ENCODE measurements at regions of chr14 and their contacts with region 1.

Region 1: DNA sequence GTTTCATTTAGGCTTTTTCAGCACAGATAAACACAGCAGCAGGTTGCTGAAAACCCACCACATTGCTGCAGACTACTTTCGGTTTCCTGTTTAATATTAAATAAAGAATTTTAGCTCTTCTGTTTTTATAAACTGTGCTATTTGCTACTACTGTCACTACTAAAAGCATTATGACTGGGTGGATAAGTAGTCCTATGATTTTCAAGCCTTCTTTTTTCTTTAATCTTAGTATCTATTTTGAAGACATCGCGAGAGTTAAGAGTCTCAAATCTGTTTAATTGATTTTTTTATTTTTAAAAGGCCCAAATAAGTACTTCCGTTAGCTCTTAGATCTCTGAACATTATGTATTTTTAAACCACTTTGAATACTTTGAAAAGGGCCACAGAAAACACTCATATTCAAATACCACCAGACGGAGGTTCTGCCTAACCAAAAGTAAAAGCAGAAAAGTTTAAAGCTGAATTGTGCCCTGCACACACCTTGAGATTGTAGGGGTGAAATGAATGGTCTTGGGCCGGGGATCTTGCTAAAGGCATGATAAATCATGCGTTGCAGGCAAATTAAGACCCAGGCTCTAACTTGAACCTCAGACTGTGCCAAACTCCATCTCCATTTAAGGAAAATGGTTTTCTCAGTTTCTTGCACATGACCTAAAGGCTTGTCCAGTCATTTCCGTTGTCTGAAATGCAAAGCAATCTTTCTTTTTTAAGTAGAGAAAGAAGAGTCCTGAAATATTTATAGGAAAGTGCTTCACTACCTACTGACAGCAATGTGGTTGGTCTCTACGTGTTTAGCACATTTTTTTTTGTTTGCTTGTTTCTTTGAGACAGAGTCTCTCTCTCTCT is 13.6 kb upstream of the FOXN3 start:
- DNase-seq: peak; percentile 97
- H3K4me3 ChIP-seq: peak overlapping the region; percentile 67
- H3K27ac ChIP-seq: peak overlapping the region; percentile 100
- H3K4me1 ChIP-seq: peaks cover 90% of the 10 kb centered on the region
- CTCF ChIP-seq: no peak; the same call in 1 of the 2 replicates

Region 2: GRCh38 chr14:89384023-89384422 is 46.6 kb before region 1 on chr14:
- CTCF ChIA-PET with region 1: no interaction called
- POLR2A ChIA-PET with region 1: interaction called, 6 read pairs
- intact Hi-C with region 1: loop called (anchors 5 kb)
- DNase-seq: peak; percentile 98
- H3K4me3 ChIP-seq: peak overlapping the region; percentile 53
- H3K27ac ChIP-seq: peak overlapping the region; percentile 91
- H3K4me1 ChIP-seq: peaks cover 81% of the 10 kb centered on the region
- CTCF ChIP-seq: no peak

Region 3: GRCh38 chr14:89445273-89445973 is 14.8 kb after region 1 on chr14:
- CTCF ChIA-PET with region 1: interaction called, 3 read pairs
- POLR2A ChIA-PET with region 1: interaction called, 17 read pairs
- intact Hi-C with region 1: loop called (anchors 2 kb)
- DNase-seq: peak; percentile 36
- H3K4me3 ChIP-seq: no peak overlapping the region
- H3K27ac ChIP-seq: peak overlapping the region; percentile 74
- H3K4me1 ChIP-seq: peaks cover 62% of the 10 kb centered on the region
- CTCF ChIP-seq: no peak

Region 4: DNA sequence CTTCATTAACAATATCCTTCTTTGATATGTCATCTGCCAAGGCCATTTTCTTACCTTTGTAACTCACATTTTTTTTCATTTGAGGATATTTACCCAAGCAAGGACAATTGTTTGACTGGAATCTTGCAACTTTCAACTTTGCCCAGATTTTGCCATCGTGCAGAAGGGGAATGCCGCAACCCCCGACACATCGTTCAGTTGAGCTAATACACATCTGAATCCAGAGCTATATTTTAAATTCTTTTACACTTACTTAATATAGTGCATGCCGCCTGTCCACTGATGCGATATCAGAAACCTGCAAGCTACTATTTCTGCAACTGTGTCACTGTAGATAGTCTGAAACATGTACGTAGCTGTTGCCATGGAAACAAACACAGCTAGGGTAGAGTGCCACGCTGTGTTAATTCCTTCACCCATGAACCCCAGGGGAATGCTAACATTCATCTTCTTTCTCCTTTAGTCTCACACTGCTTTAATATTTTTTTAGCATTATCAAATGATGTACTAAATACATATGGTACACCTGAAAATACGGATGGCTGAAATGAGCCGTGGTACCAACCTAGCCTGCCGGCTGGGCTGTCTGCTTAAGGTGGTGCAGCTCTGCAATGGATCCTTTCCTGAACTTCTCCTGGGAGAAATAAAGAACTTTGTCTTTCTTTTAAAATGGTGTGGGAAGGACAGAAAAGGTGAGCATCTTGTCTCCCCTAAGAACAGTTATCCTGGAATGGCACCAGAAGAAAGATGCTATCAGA is 63.4 kb after region 1 on chr14:
- CTCF ChIA-PET with region 1: interaction called, 6 read pairs
- POLR2A ChIA-PET with region 1: interaction called, 4 read pairs
- intact Hi-C with region 1: loop called (anchors 1 kb)
- DNase-seq: peak; percentile 88
- H3K4me3 ChIP-seq: peak overlapping the region; percentile 53
- H3K27ac ChIP-seq: peak overlapping the region; percentile 25
- H3K4me1 ChIP-seq: peaks cover 25% of the 10 kb centered on the region
- CTCF ChIP-seq: no peak

Region 5: DNA sequence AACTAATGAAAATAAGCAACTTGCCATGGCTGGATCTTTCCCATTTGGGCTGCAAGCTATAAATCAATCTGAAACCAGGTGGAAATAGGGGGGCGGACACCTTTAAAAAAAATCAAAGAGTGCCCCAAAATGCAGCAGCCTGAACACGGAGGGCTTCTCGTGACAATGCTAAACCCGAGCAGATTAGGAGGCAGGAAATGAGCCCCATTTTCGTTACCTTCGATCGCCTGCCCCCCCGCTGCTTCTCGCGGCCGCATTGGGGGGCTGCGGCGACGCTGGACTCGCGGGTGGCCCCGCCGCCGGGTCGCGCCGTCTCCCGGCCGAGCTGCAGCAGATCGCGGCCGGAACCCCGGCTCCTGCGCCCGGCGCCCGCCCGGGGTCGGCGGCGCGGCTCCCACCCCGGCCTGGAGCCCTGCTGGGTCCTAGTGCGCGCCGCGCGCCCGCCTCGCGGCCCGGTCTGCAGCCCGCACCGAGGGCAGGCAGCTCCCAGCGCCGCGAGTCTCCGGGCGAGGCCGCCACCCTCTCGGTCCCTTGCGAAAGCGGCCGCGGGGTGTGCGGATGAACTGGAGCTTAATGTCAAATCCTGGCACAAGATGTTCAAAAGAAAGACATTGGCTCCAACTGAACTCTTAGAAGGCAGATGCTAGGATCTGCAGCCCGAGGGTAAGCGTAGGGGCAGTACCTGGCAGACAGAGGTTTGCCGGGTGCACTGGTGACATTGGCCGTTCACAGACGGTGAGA is 188.4 kb after region 1 on chr14:
- CTCF ChIA-PET with region 1: no interaction called
- POLR2A ChIA-PET with region 1: interaction called, 21 read pairs
- intact Hi-C with region 1: loop called (anchors 2 kb)
- DNase-seq: peak; percentile 86
- H3K4me3 ChIP-seq: peak overlapping the region; percentile 81
- H3K27ac ChIP-seq: peak overlapping the region; percentile 74
- H3K4me1 ChIP-seq: peaks cover 58% of the 10 kb centered on the region
- CTCF ChIP-seq: peak; percentile 13; the same call in 1 of the 2 replicates

Region 6: DNA sequence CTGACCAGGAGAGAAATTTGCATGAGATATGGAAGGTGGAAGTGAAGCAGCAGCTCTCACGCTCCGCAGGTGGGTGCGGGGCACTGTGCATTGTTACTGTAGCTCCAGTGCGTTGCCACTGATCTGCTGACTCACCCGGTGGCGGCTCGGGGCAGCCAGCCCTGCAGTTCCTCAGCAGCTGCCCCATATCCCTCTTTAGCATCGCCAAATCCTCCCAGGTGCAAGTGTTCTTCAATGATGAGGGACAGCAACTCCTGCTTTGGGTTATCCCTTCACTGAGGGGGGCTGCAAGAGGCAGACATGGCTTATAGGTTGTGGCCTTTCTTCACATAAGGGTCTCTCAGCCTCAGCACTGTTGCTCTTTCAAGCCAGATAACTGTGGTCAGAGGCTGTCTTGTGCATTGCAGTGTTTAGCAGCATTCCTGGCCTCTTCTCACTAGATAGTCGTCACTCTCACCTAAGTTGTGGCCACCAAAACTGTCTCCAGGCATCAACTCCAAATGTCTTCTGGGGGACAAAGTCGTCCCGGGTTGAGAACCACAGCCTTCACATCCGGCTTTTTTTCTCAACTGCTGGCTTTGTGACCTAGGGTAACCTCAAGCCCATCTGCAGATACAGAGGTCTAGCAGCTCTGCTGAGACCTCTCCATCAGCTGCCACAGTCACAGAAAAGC is 343.2 kb after region 1 on chr14:
- CTCF ChIA-PET with region 1: interaction called, 4 read pairs
- POLR2A ChIA-PET with region 1: interaction called, 3 read pairs
- intact Hi-C with region 1: loop called (anchors 2 kb)
- DNase-seq: peak; percentile 85
- H3K4me3 ChIP-seq: peak overlapping the region; percentile 53
- H3K27ac ChIP-seq: peak overlapping the region; percentile 79
- H3K4me1 ChIP-seq: peaks cover 49% of the 10 kb centered on the region
- CTCF ChIP-seq: no peak

Region 7: GRCh38 chr14:89954070-89955028 is 523.7 kb after region 1 on chr14 and contains the start of gene EFCAB11:
- CTCF ChIA-PET with region 1: no interaction called
- POLR2A ChIA-PET with region 1: interaction called, 3 read pairs
- intact Hi-C with region 1: loop called (anchors 10 kb)
- DNase-seq: peak; percentile 98
- H3K4me3 ChIP-seq: peak within 1 kb of the TSS; percentile 76
- H3K27ac ChIP-seq: peak within 1 kb of the TSS; percentile 83
- H3K4me1 ChIP-seq: peaks cover 26% of the 10 kb centered on the region
- CTCF ChIP-seq: peak; percentile 83
- total RNA-seq, gene EFCAB11: 9.3 and 10.7 TPM in 2 replicates